Brain microvascular endothelial cell (primary cell): ENCODE measurements at regions of chr1 and their contacts with region 1.

Region 1: GRCh38 chr1:153494976-153495535 is 34.6 kb upstream of the S100A7 start:
- DNase-seq: peak; percentile 52
- H3K4me3 ChIP-seq: no peak overlapping the region
- H3K27ac ChIP-seq: no peak overlapping the region
- H3K27me3 ChIP-seq: peaks cover 4% of the 10 kb centered on the region
- CTCF ChIP-seq: peak; percentile 97

Region 2: GRCh38 chr1:153302308-153302707 is 192.7 kb before region 1 on chr1:
- in situ Hi-C with region 1: no loop called
- DNase-seq: no peak
- H3K4me3 ChIP-seq: no peak overlapping the region
- H3K27ac ChIP-seq: no peak overlapping the region
- H3K27me3 ChIP-seq: no peaks in the 10 kb centered on the region
- CTCF ChIP-seq: no peak

Region 3: DNA sequence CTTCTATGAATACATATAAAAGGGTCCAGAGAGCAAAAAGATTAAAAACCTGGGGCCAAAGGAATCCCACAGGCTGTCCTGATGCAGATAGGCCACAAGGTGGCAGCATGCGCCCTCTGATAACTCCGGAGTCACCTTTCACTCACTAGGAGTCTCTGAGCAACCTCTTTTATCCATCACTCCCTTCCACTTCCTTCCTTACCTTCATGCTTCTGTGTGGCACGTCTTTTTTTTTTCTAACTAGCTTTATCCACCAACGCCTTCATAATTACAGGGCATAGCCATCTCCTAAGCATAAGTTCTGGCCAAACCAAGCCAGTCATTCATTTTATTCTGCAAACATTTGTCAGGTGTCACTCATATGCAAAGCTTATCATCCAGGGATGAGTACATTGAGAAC is 142.5 kb before region 1 on chr1:
- in situ Hi-C with region 1: loop called (anchors 25 kb)
- DNase-seq: peak; percentile 58
- H3K4me3 ChIP-seq: no peak overlapping the region
- H3K27ac ChIP-seq: no peak overlapping the region
- H3K27me3 ChIP-seq: peaks cover 3% of the 10 kb centered on the region
- CTCF ChIP-seq: peak; percentile 92

Region 4: DNA sequence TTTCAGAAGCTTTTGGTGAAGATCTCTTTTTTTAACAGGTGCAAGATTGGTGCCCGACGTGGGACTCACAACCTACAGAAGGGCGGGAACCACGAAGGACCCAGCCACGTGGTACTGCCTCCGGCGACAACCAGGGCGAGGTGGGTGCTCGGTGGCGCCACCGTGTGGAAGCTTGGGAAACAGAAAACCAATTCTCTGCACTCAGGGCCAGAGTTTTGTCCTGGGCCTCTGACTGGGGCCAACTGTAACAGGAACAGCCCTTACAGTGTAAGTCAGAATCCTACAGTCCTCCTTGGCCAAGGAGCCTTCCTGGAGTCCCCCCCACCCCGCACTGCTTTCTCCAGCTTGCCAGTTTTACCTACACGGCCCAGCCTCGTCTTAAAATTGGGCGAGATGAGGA is 90.3 kb before region 1 on chr1:
- in situ Hi-C with region 1: no loop called
- DNase-seq: no peak
- H3K4me3 ChIP-seq: no peak overlapping the region
- H3K27ac ChIP-seq: no peak overlapping the region
- H3K27me3 ChIP-seq: no peaks in the 10 kb centered on the region
- CTCF ChIP-seq: peak; percentile 51